Naive thymus-derived CD4-positive, alpha-beta T cell (primary cell): ENCODE measurements at regions of chr5 and their contacts with region 1.

Region 1: GRCh38 chr5:87383216-87383615 is 29.5 kb downstream of the CCNH start:
- DNase-seq: no peak
- ATAC-seq: no peak
- H3K4me3 ChIP-seq: no peak overlapping the region
- H3K4me3 Mint-ChIP-seq: no peak overlapping the region
- H3K27ac ChIP-seq: no peak overlapping the region
- H3K27ac Mint-ChIP-seq: peak overlapping the region in 3 of 9 donors; percentile 19 to 70 (median 68)
- H3K4me1 ChIP-seq: no peaks in the 10 kb centered on the region
- H3K4me1 Mint-ChIP-seq: peaks cover 0 to 29% (median 21%) of the 10 kb centered on the region in 7 donors
- H3K27me3 ChIP-seq: no peaks in the 10 kb centered on the region
- H3K27me3 Mint-ChIP-seq: no peaks in the 10 kb centered on the region

Region 2: GRCh38 chr5:86894006-86894560 is 489.1 kb before region 1 on chr5:
- CTCF ChIA-PET with region 1: no interaction called
- POLR2A ChIA-PET with region 1: no interaction called
- intact Hi-C with region 1: no loop called
- DNase-seq: no peak
- ATAC-seq: no peak
- H3K4me3 ChIP-seq: no peak overlapping the region
- H3K4me3 Mint-ChIP-seq: no peak overlapping the region
- H3K27ac ChIP-seq: no peak overlapping the region
- H3K27ac Mint-ChIP-seq: no peak overlapping the region
- H3K4me1 ChIP-seq: no peaks in the 10 kb centered on the region
- H3K4me1 Mint-ChIP-seq: no peaks in the 10 kb centered on the region
- H3K27me3 ChIP-seq: no peaks in the 10 kb centered on the region
- H3K27me3 Mint-ChIP-seq: peaks cover 0 to 10% (median 0%) of the 10 kb centered on the region in 5 donors

Region 3: DNA sequence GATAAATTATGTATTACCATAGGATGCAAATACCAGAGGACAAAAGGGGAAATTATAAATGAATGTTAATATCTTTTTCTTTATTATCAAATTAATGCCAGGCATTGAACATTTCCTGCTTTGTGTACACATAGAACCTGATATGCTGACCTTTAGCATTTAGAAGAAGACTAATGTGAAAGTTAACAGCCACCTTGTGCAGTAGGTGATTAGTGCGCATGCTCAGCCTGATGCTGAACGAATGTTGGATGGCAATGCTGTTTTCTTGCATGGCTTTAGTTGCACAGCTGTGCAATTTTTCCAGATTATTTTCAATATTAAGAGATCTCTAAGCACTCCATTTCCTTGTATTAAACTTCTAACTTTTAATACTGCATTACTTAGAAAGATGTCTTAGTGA is 16.0 kb before region 1 on chr5:
- CTCF ChIA-PET with region 1: no interaction called
- POLR2A ChIA-PET with region 1: no interaction called
- intact Hi-C with region 1: loop called in 1 of 2 experiments (anchors 2 kb)
- DNase-seq: no peak
- ATAC-seq: no peak
- H3K4me3 ChIP-seq: no peak overlapping the region
- H3K4me3 Mint-ChIP-seq: no peak overlapping the region
- H3K27ac ChIP-seq: no peak overlapping the region
- H3K27ac Mint-ChIP-seq: peak overlapping the region in 2 of 9 donors; percentile 34 to 43
- H3K4me1 ChIP-seq: peaks cover 0 to 7% of the 10 kb centered on the region in 2 donors
- H3K4me1 Mint-ChIP-seq: peaks cover 5 to 45% (median 19%) of the 10 kb centered on the region in 7 donors
- H3K27me3 ChIP-seq: no peaks in the 10 kb centered on the region
- H3K27me3 Mint-ChIP-seq: no peaks in the 10 kb centered on the region

Region 4: DNA sequence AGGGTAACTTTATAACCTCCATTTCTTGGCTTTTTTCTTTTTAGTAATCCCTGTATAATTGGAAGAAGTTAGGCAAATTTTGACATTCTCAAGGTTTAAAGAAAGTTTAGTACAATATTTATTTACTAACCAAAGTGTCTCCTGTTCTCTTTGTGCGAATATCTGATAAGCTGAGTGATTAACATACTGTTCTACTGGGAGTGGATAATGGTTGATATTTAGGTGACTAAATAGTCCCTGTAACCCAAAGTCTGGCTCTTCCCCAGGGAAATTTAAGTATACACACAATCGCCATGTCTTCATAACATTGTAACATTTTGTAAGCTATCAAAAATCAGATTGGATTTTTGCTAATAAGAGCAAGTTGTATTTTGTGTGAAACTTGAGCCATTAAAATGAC is 10.5 kb before region 1 on chr5:
- CTCF ChIA-PET with region 1: no interaction called
- POLR2A ChIA-PET with region 1: interaction called, 3 read pairs
- intact Hi-C with region 1: loop called in 1 of 2 experiments (anchors 2 kb)
- DNase-seq: no peak
- ATAC-seq: no peak
- H3K4me3 ChIP-seq: no peak overlapping the region
- H3K4me3 Mint-ChIP-seq: no peak overlapping the region
- H3K27ac ChIP-seq: no peak overlapping the region
- H3K27ac Mint-ChIP-seq: peak overlapping the region in 3 of 9 donors; percentile 39 to 66 (median 53)
- H3K4me1 ChIP-seq: no peaks in the 10 kb centered on the region
- H3K4me1 Mint-ChIP-seq: peaks cover 2 to 26% (median 7%) of the 10 kb centered on the region in 7 donors
- H3K27me3 ChIP-seq: no peaks in the 10 kb centered on the region
- H3K27me3 Mint-ChIP-seq: no peaks in the 10 kb centered on the region

Region 5: DNA sequence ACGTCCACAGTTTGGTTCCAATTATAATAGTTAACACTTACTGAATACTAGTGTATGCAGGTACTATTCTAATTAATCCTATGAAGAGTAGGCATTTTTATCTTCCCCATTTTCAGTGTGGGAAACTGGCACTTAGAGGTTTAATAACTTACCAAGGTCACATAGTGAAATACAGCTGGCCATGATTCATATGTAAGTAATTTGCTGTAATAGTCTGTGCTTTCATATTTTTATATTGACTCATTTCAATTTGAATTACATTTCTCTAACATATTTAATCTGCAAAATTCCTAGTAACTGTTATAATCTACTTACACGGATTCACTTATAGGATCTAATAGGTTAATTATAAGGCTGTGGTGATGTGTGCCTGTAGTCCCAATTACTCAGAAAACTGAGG is 10.1 kb after region 1 on chr5:
- CTCF ChIA-PET with region 1: interaction called, 3 read pairs
- POLR2A ChIA-PET with region 1: no interaction called
- intact Hi-C with region 1: loop called in 1 of 2 experiments (anchors 1 kb)
- DNase-seq: no peak
- ATAC-seq: no peak
- H3K4me3 ChIP-seq: no peak overlapping the region
- H3K4me3 Mint-ChIP-seq: no peak overlapping the region
- H3K27ac ChIP-seq: no peak overlapping the region
- H3K27ac Mint-ChIP-seq: peak overlapping the region in 3 of 9 donors; percentile 33 to 74 (median 36)
- H3K4me1 ChIP-seq: no peaks in the 10 kb centered on the region
- H3K4me1 Mint-ChIP-seq: peaks cover 6 to 34% (median 20%) of the 10 kb centered on the region in 7 donors
- H3K27me3 ChIP-seq: no peaks in the 10 kb centered on the region
- H3K27me3 Mint-ChIP-seq: no peaks in the 10 kb centered on the region

Region 6: DNA sequence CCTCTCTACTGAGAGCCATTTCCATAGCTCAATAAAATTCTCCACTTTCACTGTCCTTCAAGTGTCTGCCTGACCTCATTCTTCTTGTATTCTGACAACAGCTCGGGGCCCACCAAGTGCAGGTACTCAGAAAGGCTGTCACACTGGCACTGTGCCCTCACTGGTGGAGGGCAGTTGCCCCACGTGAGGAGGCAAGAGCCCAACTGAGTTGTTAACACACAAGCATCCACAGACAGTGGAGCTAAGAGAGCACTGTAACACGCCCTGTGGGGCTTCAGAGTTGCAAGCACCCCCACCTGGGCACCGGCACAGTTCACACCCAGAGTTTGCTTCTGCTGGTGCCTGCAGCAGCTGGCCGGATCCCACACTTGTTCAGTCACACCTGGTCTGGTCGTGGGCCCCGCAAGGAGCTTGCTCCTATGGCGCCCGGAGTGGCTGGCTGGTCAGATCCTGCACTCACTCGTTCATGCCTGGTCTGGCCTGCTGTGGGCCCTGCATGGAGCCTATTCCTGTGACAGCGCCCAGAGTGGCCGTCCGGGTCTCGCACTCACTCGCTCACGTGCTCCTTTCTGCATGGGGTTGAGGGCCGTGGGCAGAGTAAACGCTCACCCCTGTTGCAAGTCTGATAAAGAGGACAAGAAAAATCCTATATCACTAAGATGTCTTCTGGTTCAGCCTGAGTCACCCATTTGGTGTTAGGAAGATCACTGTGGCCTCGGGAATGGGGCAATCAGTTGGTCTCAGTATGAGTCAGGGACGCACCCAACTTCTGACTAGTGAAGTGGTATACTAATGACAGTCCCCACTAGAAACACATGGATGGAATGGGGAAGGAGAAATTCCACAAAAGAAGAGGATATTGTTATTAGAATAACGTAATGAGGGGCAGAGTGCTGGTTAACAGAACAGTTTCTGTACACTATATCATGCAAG is 116.5 kb after region 1 on chr5:
- CTCF ChIA-PET with region 1: no interaction called
- POLR2A ChIA-PET with region 1: no interaction called
- intact Hi-C with region 1: no loop called
- DNase-seq: no peak
- ATAC-seq: no peak
- H3K4me3 ChIP-seq: no peak overlapping the region
- H3K4me3 Mint-ChIP-seq: no peak overlapping the region
- H3K27ac ChIP-seq: no peak overlapping the region
- H3K27ac Mint-ChIP-seq: no peak overlapping the region
- H3K4me1 ChIP-seq: no peaks in the 10 kb centered on the region
- H3K4me1 Mint-ChIP-seq: no peaks in the 10 kb centered on the region
- H3K27me3 ChIP-seq: no peaks in the 10 kb centered on the region
- H3K27me3 Mint-ChIP-seq: peaks cover 0 to 34% (median 15%) of the 10 kb centered on the region in 5 donors